Right ventricle myocardium superior (tissue), 1 donor: ENCODE measurements at regions of chr16 and their contacts with region 1.

Region 1: DNA sequence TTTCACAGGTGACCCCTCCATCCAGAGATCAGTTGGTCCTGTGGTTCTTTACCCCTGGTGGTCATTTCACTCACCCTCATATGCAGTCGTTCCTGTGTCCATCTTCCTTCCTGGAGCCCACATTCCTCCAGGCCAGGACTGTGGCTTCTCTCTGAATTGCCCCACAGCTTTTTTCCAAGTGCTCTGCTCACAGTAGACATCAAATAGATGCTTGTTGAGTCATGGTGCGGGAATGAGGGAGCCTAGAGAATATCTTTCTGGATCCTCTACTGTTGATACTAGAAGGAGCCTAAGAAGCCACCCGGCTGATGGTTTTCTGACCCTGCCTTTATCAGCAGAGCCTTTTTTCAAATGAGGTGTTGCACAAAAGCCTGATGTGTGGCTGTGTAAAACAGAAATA is 10.4 kb downstream of the USB1 start:
- DNase-seq: no peak
- ATAC-seq: no peak

Region 2: GRCh38 chr16:58047557-58048348 is 36.1 kb after region 1 on chr16:
- intact Hi-C with region 1: no loop called
- DNase-seq: peak; percentile 27
- ATAC-seq: peak; percentile 4

Region 3: GRCh38 chr16:58198022-58198683 is 186.5 kb after region 1 on chr16 and contains the start of gene CSNK2A2:
- intact Hi-C with region 1: loop called (anchors 10 kb)
- DNase-seq: peak; percentile 82
- ATAC-seq: peak; percentile 96
- total RNA-seq, gene CSNK2A2: 32.4 TPM

Region 4: DNA sequence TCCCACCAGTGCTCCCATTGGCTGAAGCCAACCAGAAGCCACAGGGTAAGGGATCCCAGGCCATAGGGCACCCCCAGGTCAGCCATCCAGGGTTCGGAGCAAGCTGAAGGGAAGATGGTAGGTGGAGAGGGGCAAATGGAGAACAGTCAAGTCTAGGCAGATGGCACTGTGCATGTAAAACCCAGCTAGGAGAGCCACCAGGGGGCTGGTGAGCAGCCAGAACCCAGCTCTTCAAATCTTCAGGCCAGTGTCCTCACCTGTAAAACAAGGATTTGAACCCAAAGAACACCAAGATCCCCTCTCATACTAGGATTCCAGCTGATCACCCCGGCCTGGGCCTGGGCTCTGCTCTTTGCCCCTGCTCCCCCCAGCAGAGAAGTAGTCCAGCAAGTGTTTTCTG is 424.1 kb after region 1 on chr16:
- intact Hi-C with region 1: no loop called
- DNase-seq: no peak
- ATAC-seq: no peak